ENCODE measurements at regions of chr14 and their contacts with region 1.

Region 1: DNA sequence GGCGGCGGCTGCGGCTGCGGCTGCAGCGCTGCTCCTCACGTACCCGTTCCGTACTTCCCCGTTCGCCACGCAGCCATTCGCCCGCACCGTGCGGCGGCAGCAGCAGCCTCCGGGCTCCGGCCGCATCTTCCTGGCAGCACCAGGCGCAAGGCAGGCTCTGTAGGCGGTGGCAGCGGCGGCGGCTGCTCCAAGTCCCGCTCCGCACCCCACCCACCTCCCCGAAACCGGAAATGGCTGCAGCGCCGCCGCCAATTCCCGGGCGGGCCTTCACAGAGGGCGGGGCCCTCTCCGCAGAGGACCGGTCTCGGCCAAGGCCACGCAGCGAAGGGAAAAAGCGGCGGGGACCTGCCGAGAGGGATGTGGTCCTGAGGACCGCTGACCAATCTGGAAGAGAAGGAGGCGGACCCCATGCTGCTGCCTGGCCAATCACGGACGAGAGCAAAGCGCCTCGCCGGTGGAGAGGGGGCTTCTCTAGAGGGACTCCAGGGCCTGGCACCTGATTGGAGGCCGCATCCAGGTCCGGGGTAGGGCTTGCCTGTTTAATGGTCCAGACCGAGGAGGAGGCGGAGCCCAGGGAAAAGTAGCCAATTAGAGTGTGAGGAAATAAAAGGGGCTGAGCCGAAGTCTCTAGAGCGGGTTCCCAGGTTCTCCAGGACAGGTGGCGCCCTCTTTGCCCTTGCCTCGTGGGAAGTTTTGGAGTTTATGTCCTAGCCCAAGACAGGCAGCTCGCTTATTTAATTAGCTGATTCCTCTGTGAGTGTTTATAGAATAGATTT is at the start of gene SPTLC2:
- DNase-seq: peak; percentile 92 to 99 (median 97)
- ATAC-seq: peak; percentile 96
- H3K4me3 ChIP-seq: peak within 1 kb of the TSS; percentile 75
- H3K4me3 Mint-ChIP-seq: peak within 1 kb of the TSS; percentile 90
- H3K27ac ChIP-seq: peak within 1 kb of the TSS; percentile 58 to 69
- H3K27ac Mint-ChIP-seq: peak within 1 kb of the TSS; percentile 87
- H3K4me1 ChIP-seq: peaks cover 12% of the 10 kb centered on the region
- H3K4me1 Mint-ChIP-seq: peaks cover 40% of the 10 kb centered on the region
- H3K27me3 ChIP-seq: no peaks in the 10 kb centered on the region
- H3K27me3 Mint-ChIP-seq: no peaks in the 10 kb centered on the region
- CTCF ChIP-seq: no peak
- total RNA-seq, gene SPTLC2: 14.4 to 15.8 TPM

Region 2: DNA sequence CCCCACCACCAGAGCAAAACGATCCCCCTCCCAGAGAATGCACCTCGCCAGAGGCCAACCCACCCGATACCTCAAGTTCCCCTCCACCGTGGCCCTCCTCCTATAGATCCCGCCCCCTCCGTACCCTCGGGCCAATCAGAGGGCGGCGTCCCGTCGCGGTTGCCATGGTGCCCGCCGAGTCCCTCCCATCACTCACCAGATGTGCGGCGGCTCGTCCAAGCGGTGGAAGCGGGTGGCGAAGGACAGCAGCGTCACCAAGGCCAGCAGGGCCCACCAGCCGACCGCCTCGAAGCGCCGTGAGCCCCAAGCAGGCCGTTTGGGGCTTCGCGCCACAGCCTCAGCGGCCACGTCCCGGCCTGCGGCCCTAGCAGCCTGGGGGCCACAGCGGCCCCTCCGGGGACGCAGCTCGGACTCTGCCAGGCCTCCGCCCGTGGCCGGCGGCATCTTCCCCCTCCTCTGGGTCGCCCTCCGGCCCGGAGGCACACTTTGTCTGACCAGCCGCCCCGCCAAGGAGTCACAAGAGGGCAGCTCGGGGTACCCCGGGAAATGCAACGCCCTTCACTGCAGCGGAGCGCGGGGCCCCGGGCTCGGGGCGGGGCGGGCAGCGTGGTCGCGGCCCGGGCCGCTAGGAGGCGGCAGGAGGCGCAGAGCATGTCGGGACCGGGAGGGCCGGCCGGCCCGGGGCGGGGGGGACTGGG is 296.3 kb before region 1 on chr14 and contains the start of gene POMT2:
- CTCF ChIA-PET with region 1: no interaction called
- POLR2A ChIA-PET with region 1: no interaction called
- intact Hi-C with region 1: loop called (anchors 1 to 2 kb)
- DNase-seq: peak; percentile 85 to 95 (median 91)
- ATAC-seq: peak; percentile 49
- H3K4me3 ChIP-seq: peak within 1 kb of the TSS; percentile 89 to 100
- H3K4me3 Mint-ChIP-seq: peak within 1 kb of the TSS; percentile 99
- H3K27ac ChIP-seq: peak within 1 kb of the TSS; percentile 90 to 97
- H3K27ac Mint-ChIP-seq: peak within 1 kb of the TSS; percentile 98
- H3K4me1 ChIP-seq: peaks cover 12% of the 10 kb centered on the region
- H3K4me1 Mint-ChIP-seq: peaks cover 20% of the 10 kb centered on the region
- H3K27me3 ChIP-seq: no peaks in the 10 kb centered on the region
- H3K27me3 Mint-ChIP-seq: no peaks in the 10 kb centered on the region
- CTCF ChIP-seq: no peak
- total RNA-seq, gene POMT2: 8.4 to 9.6 TPM

Region 3: DNA sequence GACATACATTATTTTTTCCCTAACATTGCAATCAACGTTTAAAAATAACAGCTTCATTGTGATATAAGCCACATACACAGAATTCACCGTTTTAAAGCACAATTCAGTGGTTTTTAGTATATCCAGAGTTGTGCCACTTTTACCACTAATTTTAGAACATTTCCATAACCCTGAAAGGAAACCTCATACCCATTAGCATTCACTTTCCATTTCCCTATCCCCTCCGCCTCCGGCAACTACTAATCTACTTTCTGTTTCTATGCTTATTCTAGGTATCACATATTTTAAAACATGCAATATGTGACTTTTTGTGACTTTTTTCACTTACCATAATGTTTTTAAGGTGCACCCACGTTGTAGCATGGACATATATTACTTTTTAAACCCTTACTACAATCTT is 62.4 kb before region 1 on chr14:
- CTCF ChIA-PET with region 1: no interaction called
- POLR2A ChIA-PET with region 1: interaction called, 3 read pairs
- intact Hi-C with region 1: loop called in 1 of 2 experiments (anchors 10 kb)
- DNase-seq: peak in 1 of 9 experiments; percentile 14
- ATAC-seq: no peak
- H3K4me3 ChIP-seq: no peak overlapping the region
- H3K4me3 Mint-ChIP-seq: no peak overlapping the region
- H3K27ac ChIP-seq: peak overlapping the region in 1 of 2 experiments; percentile 2
- H3K27ac Mint-ChIP-seq: peak overlapping the region; percentile 43
- H3K4me1 ChIP-seq: no peaks in the 10 kb centered on the region
- H3K4me1 Mint-ChIP-seq: peaks cover 2% of the 10 kb centered on the region
- H3K27me3 ChIP-seq: no peaks in the 10 kb centered on the region
- H3K27me3 Mint-ChIP-seq: no peaks in the 10 kb centered on the region
- CTCF ChIP-seq: no peak

Region 4: GRCh38 chr14:77593501-77593961 is 23.1 kb before region 1 on chr14:
- CTCF ChIA-PET with region 1: no interaction called
- POLR2A ChIA-PET with region 1: no interaction called
- intact Hi-C with region 1: loop called (anchors 1 kb)
- DNase-seq: peak in 2 of 9 experiments; percentile 28 to 69
- ATAC-seq: peak; percentile 81
- H3K4me3 ChIP-seq: peak overlapping the region; percentile 1 to 16
- H3K4me3 Mint-ChIP-seq: peak overlapping the region; percentile 75
- H3K27ac ChIP-seq: peak overlapping the region; percentile 38 to 75
- H3K27ac Mint-ChIP-seq: peak overlapping the region; percentile 92
- H3K4me1 ChIP-seq: peaks cover 25% of the 10 kb centered on the region
- H3K4me1 Mint-ChIP-seq: peaks cover 54% of the 10 kb centered on the region
- H3K27me3 ChIP-seq: no peaks in the 10 kb centered on the region
- H3K27me3 Mint-ChIP-seq: no peaks in the 10 kb centered on the region
- CTCF ChIP-seq: no peak

Region 5: DNA sequence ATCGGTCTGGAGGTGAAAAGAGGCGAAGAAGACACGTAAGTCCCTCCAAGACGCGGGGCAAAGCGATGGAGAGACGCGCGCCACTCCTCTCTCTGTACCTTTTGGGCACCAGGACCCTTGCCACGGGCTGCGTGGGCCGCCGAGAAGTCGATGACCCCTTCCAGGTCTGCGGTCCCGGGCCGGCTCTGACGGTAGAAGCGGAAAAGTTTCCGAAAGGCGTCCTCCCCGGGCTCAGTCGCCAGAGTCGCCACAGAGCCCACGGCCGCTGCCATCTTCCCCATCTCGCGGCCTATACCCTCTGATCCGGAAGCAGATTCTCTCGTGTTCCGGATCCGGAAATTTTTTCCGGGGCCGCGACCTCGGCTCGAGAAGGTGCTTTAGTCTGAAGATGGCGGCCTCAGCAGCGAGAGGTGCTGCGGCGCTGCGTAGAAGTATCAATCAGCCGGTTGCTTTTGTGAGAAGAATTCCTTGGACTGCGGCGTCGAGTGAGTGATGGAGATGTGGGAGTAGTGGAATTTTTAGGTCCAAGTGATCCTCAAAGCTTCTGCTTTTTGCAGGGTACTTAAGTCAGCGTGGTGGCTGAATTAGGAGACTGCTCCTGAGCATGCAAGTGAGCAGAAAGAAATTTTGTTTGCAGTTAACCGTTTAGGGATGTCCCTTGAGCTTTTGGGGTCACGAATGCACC is 91.2 kb after region 1 on chr14 and contains the starts of genes ALKBH1 and SLIRP:
- CTCF ChIA-PET with region 1: interaction called, 3 read pairs
- POLR2A ChIA-PET with region 1: interaction called, 3 read pairs
- intact Hi-C with region 1: loop called (anchors 2 kb)
- DNase-seq: peak; percentile 73 to 93 (median 88)
- ATAC-seq: peak; percentile 97
- H3K4me3 ChIP-seq: peak within 1 kb of the TSS; percentile 91 to 92
- H3K4me3 Mint-ChIP-seq: peak within 1 kb of the TSS; percentile 96
- H3K27ac ChIP-seq: peak within 1 kb of the TSS; percentile 72 to 75
- H3K27ac Mint-ChIP-seq: peak within 1 kb of the TSS; percentile 91
- H3K4me1 ChIP-seq: peaks cover 29% of the 10 kb centered on the region
- H3K4me1 Mint-ChIP-seq: peaks cover 46% of the 10 kb centered on the region
- H3K27me3 ChIP-seq: no peaks in the 10 kb centered on the region
- H3K27me3 Mint-ChIP-seq: no peaks in the 10 kb centered on the region
- CTCF ChIP-seq: no peak
- total RNA-seq, gene ALKBH1: 10.7 to 11.9 TPM
- total RNA-seq, gene SLIRP: 58.2 TPM

Region 6: GRCh38 chr14:77799863-77800730 is 183.5 kb after region 1 on chr14 and contains the start of gene ADCK1:
- CTCF ChIA-PET with region 1: no interaction called
- POLR2A ChIA-PET with region 1: no interaction called
- intact Hi-C with region 1: loop called (anchors 1 to 2 kb)
- DNase-seq: peak; percentile 54 to 89 (median 83)
- ATAC-seq: peak; percentile 91
- H3K4me3 ChIP-seq: peak within 1 kb of the TSS; percentile 68 to 96
- H3K4me3 Mint-ChIP-seq: peak within 1 kb of the TSS; percentile 83
- H3K27ac ChIP-seq: peak within 1 kb of the TSS; percentile 73 to 78
- H3K27ac Mint-ChIP-seq: peak within 1 kb of the TSS; percentile 76
- H3K4me1 ChIP-seq: peaks cover 3% of the 10 kb centered on the region
- H3K4me1 Mint-ChIP-seq: peaks cover 10% of the 10 kb centered on the region
- H3K27me3 ChIP-seq: no peaks in the 10 kb centered on the region
- H3K27me3 Mint-ChIP-seq: peaks cover 2% of the 10 kb centered on the region
- CTCF ChIP-seq: no peak
- total RNA-seq, gene ADCK1: 3.6 to 4.7 TPM

Measured in CD8-positive, alpha-beta T cell (primary cell).